ENCODE measurements at regions of chr20 and their contacts with region 1.

Region 1: DNA sequence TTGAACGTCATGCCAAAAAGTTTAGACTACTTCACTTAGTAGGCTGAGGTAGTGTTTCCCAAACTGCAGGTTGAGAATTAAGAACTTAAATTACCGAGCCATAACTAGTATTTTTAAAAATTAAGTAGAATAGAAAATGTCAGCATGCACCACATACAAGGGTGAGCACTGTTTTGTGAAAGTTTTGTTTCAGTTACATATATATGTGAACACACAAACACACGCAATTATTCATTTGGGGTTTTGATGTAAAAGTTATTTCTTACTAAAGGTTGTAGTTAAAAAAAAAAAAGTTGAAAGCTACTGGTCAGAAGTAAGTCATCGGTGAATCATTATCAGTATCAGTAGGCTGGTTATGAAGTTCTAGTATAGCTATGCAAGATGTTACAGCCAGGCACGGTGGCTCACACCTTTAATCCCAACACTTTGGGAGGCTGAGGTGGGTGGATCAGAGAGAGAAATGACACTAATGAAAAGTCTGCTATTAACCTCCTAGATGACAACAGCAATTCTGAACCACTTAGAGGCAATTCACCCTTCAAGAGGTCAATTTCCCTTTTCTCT is 24.1 kb downstream of the FASTKD5 start:
- DNase-seq: no peak
- H3K4me3 ChIP-seq: no peak overlapping the region
- H3K27ac ChIP-seq: no peak overlapping the region
- H3K4me1 ChIP-seq: no peaks in the 10 kb centered on the region
- H3K27me3 ChIP-seq: no peaks in the 10 kb centered on the region
- CTCF ChIP-seq: no peak

Region 2: DNA sequence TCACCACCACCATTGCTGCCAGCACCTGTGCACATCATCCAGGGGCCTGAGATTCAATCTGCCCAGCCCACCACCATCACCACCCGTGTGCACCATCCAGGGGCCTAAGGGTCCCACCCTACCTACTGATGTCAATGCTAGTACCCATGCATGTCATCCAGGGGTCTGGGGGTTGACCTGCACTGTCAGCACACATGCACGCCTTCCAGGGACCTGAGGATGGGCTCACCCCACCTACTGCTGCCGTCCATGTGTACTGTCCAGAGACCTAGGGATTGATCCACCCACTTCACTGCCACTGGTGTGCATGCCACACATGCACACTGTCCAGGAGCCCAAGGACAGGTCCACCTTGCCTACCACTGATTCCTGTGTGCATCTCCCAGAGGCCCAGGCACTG is 76.1 kb before region 1 on chr20:
- CTCF ChIA-PET with region 1: interaction called, 11 read pairs
- POLR2A ChIA-PET with region 1: no interaction called
- intact Hi-C with region 1: no loop called
- DNase-seq: no peak
- H3K4me3 ChIP-seq: no peak overlapping the region
- H3K27ac ChIP-seq: no peak overlapping the region
- H3K4me1 ChIP-seq: no peaks in the 10 kb centered on the region
- H3K27me3 ChIP-seq: no peaks in the 10 kb centered on the region
- CTCF ChIP-seq: no peak